OCI-LY7 (cell line): ENCODE measurements at regions of chrX and their contacts with region 1.

Region 1: DNA sequence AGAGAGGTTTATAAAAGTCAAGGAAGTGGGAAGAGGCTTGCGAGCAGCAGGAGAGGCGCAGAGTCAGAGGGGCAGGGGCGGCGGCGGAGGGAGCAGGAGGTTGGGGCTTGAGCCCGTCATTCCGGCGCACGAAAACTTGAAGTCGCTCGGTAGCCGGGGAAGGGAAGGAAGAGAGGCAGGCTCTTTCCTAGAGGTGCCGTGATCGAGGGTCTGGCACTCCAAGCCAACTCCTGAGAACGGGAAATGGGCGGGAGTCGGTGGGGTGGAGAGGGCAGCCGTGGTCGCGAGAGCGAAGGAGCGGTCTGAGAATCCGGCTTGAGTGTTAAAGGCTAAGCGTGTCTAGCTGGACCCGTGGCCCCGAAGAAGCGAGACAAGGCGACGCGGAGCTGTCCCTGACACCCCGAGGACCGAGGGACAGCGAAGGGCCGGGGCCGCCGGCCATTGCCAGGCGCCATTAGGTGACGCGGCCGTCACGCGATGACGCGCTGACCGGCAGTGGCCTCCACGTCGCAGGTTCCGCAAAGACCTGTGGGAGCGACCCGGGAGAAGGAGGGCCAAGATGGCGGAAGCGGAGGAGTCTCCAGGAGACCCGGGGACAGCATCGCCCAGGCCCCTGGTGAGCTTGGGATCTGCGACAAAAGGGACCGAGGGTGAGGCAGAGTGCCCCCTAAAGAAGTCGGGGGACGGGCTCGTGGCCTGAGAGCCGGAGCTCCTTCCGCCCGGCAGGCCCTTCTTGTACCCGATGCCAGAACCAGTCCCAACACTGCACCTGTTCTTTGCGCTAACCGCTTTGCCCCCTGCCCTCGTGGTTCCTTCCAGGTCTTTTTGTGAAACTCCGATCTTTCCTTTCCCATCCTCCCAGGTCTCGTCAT is at the start of gene YIPF6:
- DNase-seq: peak; percentile 75
- H3K4me3 ChIP-seq: peak within 1 kb of the TSS; percentile 88
- H3K27ac ChIP-seq: peak within 1 kb of the TSS; percentile 30
- H3K4me1 ChIP-seq: peaks cover 7% of the 10 kb centered on the region
- CTCF ChIP-seq: no peak
- total RNA-seq, gene YIPF6: 7.2 and 9.0 TPM in 2 replicates

Region 2: GRCh38 chrX:68532831-68533533 is 34.2 kb after region 1 on chrX:
- CTCF ChIA-PET with region 1: no interaction called
- POLR2A ChIA-PET with region 1: no interaction called
- intact Hi-C with region 1: no loop called
- DNase-seq: no peak
- H3K4me3 ChIP-seq: no peak overlapping the region
- H3K27ac ChIP-seq: no peak overlapping the region
- H3K4me1 ChIP-seq: no peaks in the 10 kb centered on the region
- CTCF ChIP-seq: no peak

Region 3: GRCh38 chrX:68556029-68556428 is 57.3 kb after region 1 on chrX:
- CTCF ChIA-PET with region 1: no interaction called
- POLR2A ChIA-PET with region 1: no interaction called
- intact Hi-C with region 1: no loop called
- DNase-seq: no peak
- H3K4me3 ChIP-seq: no peak overlapping the region
- H3K27ac ChIP-seq: no peak overlapping the region
- H3K4me1 ChIP-seq: no peaks in the 10 kb centered on the region
- CTCF ChIP-seq: no peak

Region 4: DNA sequence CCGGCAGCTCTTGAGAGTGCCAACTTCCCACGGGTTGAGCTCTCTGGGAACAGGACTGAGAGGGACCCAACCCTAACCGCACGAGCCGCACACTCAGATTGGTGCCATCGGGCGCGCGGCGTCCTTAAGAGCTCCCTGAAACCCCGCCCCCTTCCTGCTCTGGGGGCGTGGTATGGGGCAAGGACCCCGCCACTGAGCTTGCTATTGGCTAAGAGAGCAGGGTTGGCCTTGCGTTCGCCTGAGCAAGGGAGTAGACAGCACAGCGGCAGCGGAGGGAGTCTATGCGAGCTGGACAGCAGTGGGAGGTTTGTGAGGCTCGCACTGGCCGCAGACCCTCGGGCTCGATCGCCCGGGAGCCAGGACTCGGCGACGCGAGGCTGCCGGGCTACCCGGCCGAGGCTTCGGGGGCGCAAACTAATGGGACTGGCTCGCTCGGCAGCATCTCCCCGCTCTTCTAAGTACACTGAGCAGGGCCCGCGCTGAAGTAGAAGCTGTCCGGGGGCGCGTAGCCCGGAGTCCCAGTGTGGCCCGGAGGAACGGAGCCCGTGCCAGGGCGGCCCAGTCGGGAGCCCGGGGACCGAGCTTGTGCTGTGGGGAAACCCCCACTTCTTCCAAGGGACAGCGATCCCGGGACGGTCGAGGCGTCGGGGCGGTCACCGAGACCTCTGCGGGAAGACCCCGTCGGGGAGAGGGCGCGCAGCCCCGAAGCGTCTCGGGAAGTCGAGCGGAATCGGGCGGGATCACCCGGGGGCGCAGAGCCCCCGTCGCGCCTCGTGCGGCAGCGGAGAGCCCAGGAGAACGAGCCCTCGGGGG is 330.2 kb after region 1 on chrX and contains the start of gene EFNB1:
- CTCF ChIA-PET with region 1: no interaction called
- POLR2A ChIA-PET with region 1: no interaction called
- intact Hi-C with region 1: loop called (anchors 5 kb)
- DNase-seq: peak; percentile 92
- H3K4me3 ChIP-seq: peak within 1 kb of the TSS; percentile 80
- H3K27ac ChIP-seq: no peak within 1 kb of the TSS
- H3K4me1 ChIP-seq: peaks cover 9% of the 10 kb centered on the region
- CTCF ChIP-seq: no peak
- total RNA-seq, gene EFNB1: 1.8 and 2.0 TPM in 2 replicates